ENCODE measurements at regions of chr12 and their contacts with region 1.

Region 1: DNA sequence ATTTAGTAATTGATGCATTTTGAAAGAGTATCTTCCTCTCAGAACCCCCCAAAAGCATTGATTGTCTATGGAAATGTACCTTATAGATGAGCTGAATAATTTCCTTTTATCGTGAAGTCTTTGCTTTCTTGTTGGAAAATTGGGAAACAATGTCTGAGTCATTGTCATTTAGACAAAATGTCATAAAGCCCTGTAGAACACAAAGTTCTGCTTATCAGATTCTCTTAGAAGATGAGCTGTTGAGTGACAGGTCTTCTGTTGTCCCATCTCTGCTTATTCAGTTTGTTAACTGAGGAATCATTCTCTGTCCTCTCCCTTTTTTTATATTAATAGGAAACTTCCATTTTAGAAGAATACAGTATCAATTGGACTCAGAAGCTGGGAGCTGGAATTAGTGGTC is 22.9 kb downstream of the MAPKAPK5 start:
- DNase-seq: no peak
- ATAC-seq: no peak
- H3K4me3 Mint-ChIP-seq: no peak overlapping the region
- H3K27ac Mint-ChIP-seq: peak overlapping the region; percentile 41; the same call in 1 of the 2 replicates
- H3K4me1 Mint-ChIP-seq: peaks cover 57% of the 10 kb centered on the region
- H3K27me3 Mint-ChIP-seq: no peaks in the 10 kb centered on the region
- CTCF ChIP-seq: no peak

Region 2: DNA sequence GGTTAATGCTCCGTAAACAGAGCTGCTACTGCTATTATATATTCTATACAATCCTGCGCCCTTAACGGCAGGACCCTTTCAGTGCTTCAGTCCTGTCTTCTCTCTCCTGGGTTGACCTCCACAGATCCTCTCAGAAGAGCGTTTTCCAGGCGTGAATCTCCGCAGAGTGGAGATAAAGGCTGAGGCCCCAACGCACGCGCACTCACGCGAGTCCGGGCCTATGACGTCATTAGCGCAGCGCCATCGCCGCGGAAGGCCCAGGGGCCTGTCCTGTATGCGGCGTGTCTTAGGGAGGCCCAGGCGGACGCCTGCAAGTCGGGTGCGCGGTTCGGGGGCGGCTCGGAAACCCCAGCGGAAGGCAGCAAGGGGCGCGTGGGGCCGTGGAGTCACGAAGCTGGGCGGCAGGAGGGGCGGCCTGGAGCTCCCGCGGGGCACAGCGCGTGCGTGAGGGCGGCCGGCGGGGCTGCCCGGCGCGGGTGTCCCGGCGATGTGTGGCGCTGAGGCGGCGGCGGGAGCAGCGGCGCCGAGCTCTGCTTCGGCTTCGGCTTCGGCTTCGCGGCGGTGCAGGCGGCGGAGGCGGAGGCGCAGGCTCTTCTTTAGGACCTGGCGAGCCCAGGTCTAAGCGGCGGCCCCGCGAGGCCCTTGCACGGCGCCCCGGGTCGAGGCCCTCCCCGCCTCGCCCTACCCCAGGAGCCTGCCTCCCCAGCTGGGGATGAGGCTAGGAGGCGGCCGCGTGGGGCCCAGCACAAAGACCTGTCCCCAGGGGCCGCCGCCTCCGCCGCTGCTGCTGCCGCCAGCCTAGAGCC is 23.0 kb before region 1 on chr12 and contains the start of gene MAPKAPK5:
- CTCF ChIA-PET with region 1: no interaction called
- POLR2A ChIA-PET with region 1: interaction called, 11 read pairs
- DNase-seq: peak; percentile 94
- ATAC-seq: peak; percentile 89
- H3K4me3 Mint-ChIP-seq: peak within 1 kb of the TSS; percentile 97
- H3K27ac Mint-ChIP-seq: peak within 1 kb of the TSS; percentile 98
- H3K4me1 Mint-ChIP-seq: peaks cover 21% of the 10 kb centered on the region
- H3K27me3 Mint-ChIP-seq: no peaks in the 10 kb centered on the region
- CTCF ChIP-seq: no peak
- total RNA-seq, gene MAPKAPK5: 71.1 to 81.8 TPM (median 71.2 TPM) in 3 replicates